ENCODE measurements at regions of chr14 and their contacts with region 1.

Region 1: GRCh38 chr14:55638665-55639064 is 58.7 kb downstream of the KTN1 start:
- DNase-seq: no peak

Region 2: GRCh38 chr14:56322531-56322930 is 683.9 kb after region 1 on chr14:
- CTCF ChIA-PET with region 1: interaction called, 14 read pairs
- POLR2A ChIA-PET with region 1: no interaction called
- DNase-seq: no peak

Measured in HEK293T (cell line).